Posterior vena cava (tissue), 2 donors: ENCODE measurements at regions of chr14 and their contacts with region 1.

Region 1: DNA sequence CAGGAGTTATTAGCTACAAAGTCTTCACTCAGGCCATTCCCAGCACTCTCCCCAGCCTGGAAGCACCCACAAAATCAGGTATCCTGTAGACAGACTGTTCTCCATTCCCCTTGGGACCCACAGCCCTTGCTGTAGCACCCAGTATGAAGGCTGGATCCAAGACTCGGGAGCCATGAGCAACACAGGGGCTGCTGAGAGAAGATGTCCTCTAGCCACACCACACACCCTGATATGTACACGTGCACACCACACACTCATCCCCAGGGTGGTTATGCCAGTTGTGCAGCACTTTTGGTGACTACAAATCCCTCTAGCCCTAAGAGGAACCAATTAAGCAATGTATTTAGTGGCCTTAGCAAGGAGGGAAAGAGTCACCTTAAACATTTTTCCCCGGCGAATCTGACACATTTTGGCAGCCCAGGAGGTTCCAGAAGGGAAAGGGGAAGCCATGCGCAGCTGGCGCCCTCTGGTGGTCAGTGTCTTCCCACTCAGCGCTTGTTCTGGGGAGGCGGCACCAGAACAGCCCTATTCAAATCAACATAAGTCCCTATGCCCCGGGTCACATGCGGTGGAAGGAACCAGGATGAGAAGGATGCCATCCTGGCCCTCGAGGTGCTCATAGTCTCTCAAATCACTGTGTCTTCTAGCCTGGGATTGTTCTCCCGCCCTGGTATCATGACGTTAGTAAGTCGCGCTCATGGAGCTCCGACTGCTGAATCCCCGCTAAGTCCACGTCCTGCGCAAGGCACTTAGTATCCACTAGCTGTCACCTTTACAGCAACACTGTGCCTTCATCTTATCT is 96.9 kb downstream of the GCH1 start:
- DNase-seq: peak; percentile 96

Region 2: DNA sequence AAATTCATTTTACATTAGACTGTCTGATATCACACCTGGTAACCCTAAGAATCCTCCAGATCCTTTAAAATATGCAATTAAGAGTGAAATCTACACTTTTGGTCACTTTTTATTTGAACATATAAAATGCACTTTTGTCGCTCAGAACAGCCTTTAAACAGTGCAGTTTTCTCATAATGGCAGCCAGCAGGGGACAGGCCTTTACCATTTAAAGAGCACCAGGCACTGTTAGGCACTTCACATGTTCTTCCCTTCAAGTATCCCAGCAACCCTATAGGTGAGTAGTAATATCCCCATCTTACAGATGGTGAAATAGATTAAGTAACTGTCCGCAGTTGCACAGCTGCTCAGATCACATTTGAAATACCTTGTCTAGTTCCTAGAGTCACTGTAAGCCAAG is 250.1 kb before region 1 on chr14:
- intact Hi-C with region 1: loop called in 1 of 2 experiments (anchors 10 kb)
- DNase-seq: no peak

Region 3: DNA sequence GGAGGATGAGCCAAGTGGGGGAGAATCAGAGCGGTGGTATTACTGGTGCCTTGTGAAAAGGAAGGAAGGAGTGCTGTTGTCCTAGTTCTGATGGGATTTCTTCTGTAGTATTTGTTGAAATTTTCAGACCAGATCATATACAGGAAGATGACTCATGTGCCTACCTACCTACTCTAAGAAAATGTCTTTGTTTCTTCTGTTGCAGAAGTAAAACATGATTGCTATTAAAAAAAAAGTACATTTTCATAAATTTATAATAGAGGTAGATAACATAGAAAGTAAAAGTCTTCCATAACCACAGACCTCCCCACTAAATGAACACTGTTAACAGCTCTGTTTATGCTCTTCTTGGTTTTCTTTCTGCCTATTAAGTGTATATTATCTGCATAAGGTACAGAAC is 211.9 kb before region 1 on chr14:
- intact Hi-C with region 1: no loop called
- DNase-seq: no peak

Region 4: DNA sequence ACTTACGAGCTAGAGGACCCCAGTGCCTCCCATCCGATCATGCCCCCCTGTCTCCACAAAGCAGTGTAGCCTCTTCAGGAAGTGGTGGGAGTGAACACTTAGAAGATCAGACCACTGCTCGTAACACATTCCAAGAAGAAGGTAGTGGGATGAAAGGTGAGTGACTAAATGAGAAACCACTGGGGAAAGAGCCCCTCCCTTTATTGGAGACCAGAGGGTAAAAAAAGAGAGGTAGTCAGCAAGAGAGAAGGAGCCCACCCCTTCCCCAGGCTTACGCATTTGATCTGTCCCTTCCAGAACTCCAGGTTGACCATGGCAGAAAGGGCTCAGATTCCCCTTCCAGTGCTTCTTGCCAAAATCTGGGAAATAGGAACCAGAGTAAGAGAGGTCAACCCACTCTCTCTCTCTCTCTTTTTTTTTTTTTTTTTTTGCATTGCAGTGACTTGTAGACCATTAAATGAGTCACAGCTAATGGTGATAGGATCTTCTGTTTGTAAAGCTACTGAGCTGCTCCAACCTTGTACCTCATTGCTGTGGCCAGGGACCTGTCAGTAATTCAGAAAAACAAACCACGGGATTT is 68.5 kb before region 1 on chr14:
- intact Hi-C with region 1: loop called in 1 of 2 experiments (anchors 2 kb)
- DNase-seq: no peak

Region 5: GRCh38 chr14:54857830-54858269 is 52.1 kb after region 1 on chr14:
- intact Hi-C with region 1: no loop called
- DNase-seq: no peak